Activated CD8-positive, alpha-beta T cell treated with anti-CD3 and anti-CD28 coated beads, Interleukin-2, amount 10 ng/mL, durations not matched to agents 7 days and 5 days (primary cell): ENCODE measurements at regions of chr5 and their contacts with region 1.

Region 1: DNA sequence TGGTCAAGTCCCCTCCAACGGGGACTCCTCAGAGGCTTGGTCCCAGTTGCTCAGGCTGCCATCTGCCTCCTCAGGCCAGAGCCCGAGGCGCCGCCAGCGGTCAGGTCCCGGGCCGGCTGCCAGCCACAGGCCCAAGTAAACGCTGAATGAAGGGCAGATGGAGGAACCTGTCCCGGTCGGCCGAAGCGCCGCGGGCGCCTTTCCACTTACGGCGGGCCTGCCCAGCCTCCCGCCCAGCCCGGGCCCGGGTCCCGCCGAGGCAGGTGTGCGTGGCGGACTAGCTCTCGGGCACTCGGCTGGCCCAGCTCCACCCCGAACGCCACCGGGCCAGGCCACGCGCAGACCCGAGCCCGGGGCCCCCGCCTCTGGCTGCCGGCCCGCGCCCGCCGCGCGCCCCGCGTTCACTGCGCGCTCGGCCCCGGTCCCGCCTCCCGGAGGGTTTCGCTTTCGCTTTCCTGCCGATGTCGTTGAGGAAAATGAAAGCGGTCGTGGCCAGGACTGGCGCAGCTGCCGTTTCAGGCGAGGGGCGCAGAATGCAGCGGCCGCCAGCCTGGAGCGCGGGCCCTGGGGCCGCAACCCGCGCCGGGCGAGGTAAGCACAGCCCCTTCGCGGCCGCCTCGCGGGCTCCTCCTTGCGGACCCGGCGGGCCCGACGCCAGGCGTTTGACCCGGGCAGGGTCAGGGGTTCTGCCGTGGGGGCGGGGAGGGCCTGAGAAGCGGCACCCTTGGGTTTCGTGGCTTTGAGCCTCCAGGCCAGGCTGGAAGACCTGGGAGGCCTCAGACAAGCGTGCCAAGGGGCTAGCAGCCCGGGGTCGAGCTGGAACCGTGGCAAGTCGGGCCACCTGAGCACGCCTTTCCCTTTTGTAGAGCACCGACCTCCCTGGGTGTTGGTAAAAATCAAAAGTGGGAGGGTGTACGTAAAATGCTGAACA is 41.2 kb downstream of the SLC22A5 start:
- DNase-seq: peak; percentile 92
- ATAC-seq: peak; percentile 86
- H3K4me3 Mint-ChIP-seq: peak overlapping the region; percentile 91
- H3K27ac Mint-ChIP-seq: peak overlapping the region; percentile 99
- H3K4me1 Mint-ChIP-seq: peaks cover 58% of the 10 kb centered on the region
- H3K27me3 Mint-ChIP-seq: no peaks in the 10 kb centered on the region

Region 2: GRCh38 chr5:132386644-132387286 is 24.0 kb before region 1 on chr5:
- CTCF ChIA-PET with region 1: interaction called, 20 read pairs
- POLR2A ChIA-PET with region 1: interaction called, 5 read pairs
- DNase-seq: peak; percentile 87
- ATAC-seq: peak; percentile 93
- H3K4me3 Mint-ChIP-seq: no peak overlapping the region
- H3K27ac Mint-ChIP-seq: peak overlapping the region; percentile 51
- H3K4me1 Mint-ChIP-seq: peaks cover 57% of the 10 kb centered on the region
- H3K27me3 Mint-ChIP-seq: no peaks in the 10 kb centered on the region

Region 3: GRCh38 chr5:132456296-132457001 is 45.7 kb after region 1 on chr5:
- CTCF ChIA-PET with region 1: interaction called, 10 read pairs
- POLR2A ChIA-PET with region 1: interaction called, 22 read pairs
- DNase-seq: peak; percentile 77
- ATAC-seq: peak; percentile 69
- H3K4me3 Mint-ChIP-seq: peak overlapping the region; percentile 63
- H3K27ac Mint-ChIP-seq: peak overlapping the region; percentile 99
- H3K4me1 Mint-ChIP-seq: peaks cover 91% of the 10 kb centered on the region
- H3K27me3 Mint-ChIP-seq: no peaks in the 10 kb centered on the region

Region 4: GRCh38 chr5:132473019-132473531 is 62.4 kb after region 1 on chr5:
- CTCF ChIA-PET with region 1: interaction called, 3 read pairs
- POLR2A ChIA-PET with region 1: interaction called, 249 read pairs
- DNase-seq: peak; percentile 95
- ATAC-seq: peak; percentile 63
- H3K4me3 Mint-ChIP-seq: peak overlapping the region; percentile 42
- H3K27ac Mint-ChIP-seq: peak overlapping the region; percentile 94
- H3K4me1 Mint-ChIP-seq: peaks cover 92% of the 10 kb centered on the region
- H3K27me3 Mint-ChIP-seq: no peaks in the 10 kb centered on the region

Region 5: GRCh38 chr5:132490486-132491367 is 80.0 kb after region 1 on chr5 and contains the start of gene IRF1:
- CTCF ChIA-PET with region 1: interaction called, 75 read pairs
- POLR2A ChIA-PET with region 1: interaction called, 249 read pairs
- DNase-seq: peak; percentile 98
- ATAC-seq: peak; percentile 70
- H3K4me3 Mint-ChIP-seq: peak within 1 kb of the TSS; percentile 92
- H3K27ac Mint-ChIP-seq: peak within 1 kb of the TSS; percentile 97
- H3K4me1 Mint-ChIP-seq: peaks cover 68% of the 10 kb centered on the region
- H3K27me3 Mint-ChIP-seq: no peaks in the 10 kb centered on the region
- total RNA-seq, gene IRF1: 221 to 228 TPM

Region 6: GRCh38 chr5:132500931-132501630 is 90.4 kb after region 1 on chr5:
- CTCF ChIA-PET with region 1: interaction called, 75 read pairs
- POLR2A ChIA-PET with region 1: interaction called, 74 read pairs
- DNase-seq: peak; percentile 85
- ATAC-seq: peak; percentile 25
- H3K4me3 Mint-ChIP-seq: no peak overlapping the region
- H3K27ac Mint-ChIP-seq: peak overlapping the region; percentile 81
- H3K4me1 Mint-ChIP-seq: peaks cover 45% of the 10 kb centered on the region
- H3K27me3 Mint-ChIP-seq: peaks cover 5% of the 10 kb centered on the region